HepG2 (cell line): ENCODE measurements at regions of chr3 and their contacts with region 1.

Region 1: DNA sequence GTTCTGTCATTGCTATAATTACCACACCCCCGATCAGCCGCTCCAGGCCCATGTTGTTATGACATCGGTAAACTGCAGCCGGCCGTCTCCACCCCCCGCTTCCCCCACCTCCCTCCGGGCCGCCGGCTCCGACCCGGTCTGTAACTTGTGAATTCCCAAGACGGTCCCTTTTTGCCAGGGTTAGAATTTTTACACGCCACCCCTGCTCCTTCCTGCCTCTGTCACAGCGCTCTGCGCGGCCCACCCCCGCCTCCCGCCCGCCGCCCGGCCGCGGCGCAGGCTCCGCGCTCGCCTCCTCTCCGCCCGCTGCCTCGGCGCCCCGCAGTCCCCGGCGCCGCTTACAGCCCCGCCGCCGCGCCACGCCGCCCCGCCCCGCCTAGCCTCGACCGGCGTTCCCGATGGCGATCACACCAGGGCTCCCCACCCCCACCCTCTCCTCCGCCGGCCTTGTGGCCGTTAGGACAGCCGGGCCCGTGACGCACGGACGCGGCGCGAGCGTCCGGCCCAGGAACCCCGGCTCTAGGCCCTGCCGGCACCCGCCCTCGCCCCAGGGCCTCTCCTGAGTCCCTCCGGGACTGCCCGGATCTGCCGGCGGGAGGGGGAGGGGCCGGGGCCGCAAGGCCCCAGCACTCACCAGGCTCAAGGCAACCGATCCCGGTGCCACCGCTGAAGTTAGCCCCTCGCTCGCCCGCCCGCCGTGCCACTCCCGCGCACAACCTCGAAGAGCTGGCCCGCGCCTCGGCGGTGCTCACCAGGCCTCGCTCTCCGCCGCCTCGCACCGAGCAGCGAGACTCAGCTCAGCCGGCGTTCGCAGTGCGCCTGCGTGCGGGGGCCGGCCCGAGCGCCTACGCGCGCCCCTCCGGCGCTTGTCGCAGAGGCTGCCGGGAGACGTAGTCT is at the start of gene KPNA1:
- DNase-seq: peak; percentile 76
- ATAC-seq: peak; percentile 94
- H3K4me3 ChIP-seq: peak within 1 kb of the TSS; percentile 78 to 89 (median 79)
- H3K27ac ChIP-seq: peak within 1 kb of the TSS; percentile 97
- H3K4me1 ChIP-seq: peaks cover 56% of the 10 kb centered on the region
- H3K27me3 ChIP-seq: no peaks in the 10 kb centered on the region; a peak in 1 of 5 replicates
- CTCF ChIP-seq: no peak; the same call in 1 of the 2 replicates
- EP300 ChIP-seq: no peak
- POLR2A ChIP-seq: peak; percentile 86 to 95
- RAD21 ChIP-seq: peak; percentile 64
- total RNA-seq, gene KPNA1: 30.0 and 49.7 TPM in 2 replicates

Region 2: GRCh38 chr3:122398920-122399319 is 115.5 kb before region 1 on chr3:
- CTCF ChIA-PET with region 1: no interaction called
- POLR2A ChIA-PET with region 1: no interaction called
- in situ Hi-C with region 1: no loop called
- intact Hi-C with region 1: no loop called
- DNase-seq: no peak
- ATAC-seq: no peak
- H3K4me3 ChIP-seq: no peak overlapping the region
- H3K27ac ChIP-seq: no peak overlapping the region
- H3K4me1 ChIP-seq: peaks cover 6% of the 10 kb centered on the region
- H3K27me3 ChIP-seq: no peaks in the 10 kb centered on the region
- CTCF ChIP-seq: no peak
- EP300 ChIP-seq: no peak
- POLR2A ChIP-seq: no peak
- RAD21 ChIP-seq: no peak

Region 3: DNA sequence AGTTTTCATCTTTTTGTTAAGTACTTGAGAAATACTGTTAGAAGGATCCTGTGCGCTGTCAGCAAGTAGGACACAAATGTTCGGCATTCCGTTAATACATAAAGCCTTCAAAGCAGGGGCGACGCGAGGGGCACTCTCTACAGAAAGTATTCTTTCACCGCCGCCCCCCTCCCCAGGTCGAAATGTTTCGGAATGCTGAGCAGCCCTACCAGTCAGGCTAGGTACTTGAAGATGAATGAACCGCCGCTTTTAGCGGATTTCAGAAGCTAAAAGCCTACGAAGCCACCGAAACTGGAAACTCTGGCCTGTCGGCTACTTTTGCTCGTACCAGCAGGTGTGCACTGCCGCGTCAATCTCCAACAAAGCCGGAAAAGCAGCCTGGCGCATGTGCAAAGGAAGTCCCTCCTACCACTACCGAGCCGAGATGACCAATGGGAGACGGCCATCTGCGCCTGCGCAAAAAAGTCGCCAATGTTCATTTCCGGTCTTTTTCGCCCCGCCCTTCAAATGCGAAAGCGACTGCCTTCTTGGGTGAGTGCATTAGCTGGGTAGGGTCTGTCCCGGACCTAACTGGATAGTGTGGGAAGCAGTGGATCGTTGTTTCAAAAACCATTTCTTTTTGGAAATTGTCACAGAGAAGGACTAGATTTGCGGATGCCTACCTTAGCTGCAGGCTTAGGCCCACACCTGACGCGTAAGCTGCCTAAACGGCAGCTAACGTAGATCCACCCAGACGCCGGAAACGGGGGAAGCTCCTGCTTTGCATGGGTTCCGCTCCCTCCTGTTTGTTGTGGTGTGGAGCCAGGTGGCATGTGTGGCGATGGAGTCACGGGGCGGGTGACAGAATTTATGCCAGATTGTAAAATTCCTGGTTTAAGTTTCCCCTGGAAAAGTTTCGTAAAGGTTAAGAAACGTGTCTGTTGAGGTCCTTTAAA is 98.4 kb before region 1 on chr3 and contains the start of gene WDR5B:
- CTCF ChIA-PET with region 1: no interaction called
- POLR2A ChIA-PET with region 1: interaction called, 12 read pairs
- in situ Hi-C with region 1: no loop called
- intact Hi-C with region 1: loop called (anchors 2 kb)
- DNase-seq: peak; percentile 96
- ATAC-seq: peak; percentile 95
- H3K4me3 ChIP-seq: peak within 1 kb of the TSS; percentile 61 to 81 (median 81)
- H3K27ac ChIP-seq: peak within 1 kb of the TSS; percentile 89
- H3K4me1 ChIP-seq: peaks cover 33% of the 10 kb centered on the region
- H3K27me3 ChIP-seq: no peaks in the 10 kb centered on the region; a peak in 1 of 5 replicates
- CTCF ChIP-seq: no peak
- EP300 ChIP-seq: no peak
- POLR2A ChIP-seq: peak; percentile 90 to 97
- RAD21 ChIP-seq: peak; percentile 35; the same call in 1 of the 2 replicates
- total RNA-seq, gene WDR5B: 3.6 and 4.5 TPM in 2 replicates

Region 4: GRCh38 chr3:122469659-122470058 is 44.7 kb before region 1 on chr3:
- CTCF ChIA-PET with region 1: no interaction called
- POLR2A ChIA-PET with region 1: no interaction called
- in situ Hi-C with region 1: no loop called
- intact Hi-C with region 1: loop called (anchors 5 kb)
- DNase-seq: no peak
- ATAC-seq: no peak
- H3K4me3 ChIP-seq: no peak overlapping the region
- H3K27ac ChIP-seq: no peak overlapping the region
- H3K4me1 ChIP-seq: peaks cover 13% of the 10 kb centered on the region
- H3K27me3 ChIP-seq: no peaks in the 10 kb centered on the region
- CTCF ChIP-seq: no peak
- EP300 ChIP-seq: no peak
- POLR2A ChIP-seq: no peak
- RAD21 ChIP-seq: no peak

Region 5: DNA sequence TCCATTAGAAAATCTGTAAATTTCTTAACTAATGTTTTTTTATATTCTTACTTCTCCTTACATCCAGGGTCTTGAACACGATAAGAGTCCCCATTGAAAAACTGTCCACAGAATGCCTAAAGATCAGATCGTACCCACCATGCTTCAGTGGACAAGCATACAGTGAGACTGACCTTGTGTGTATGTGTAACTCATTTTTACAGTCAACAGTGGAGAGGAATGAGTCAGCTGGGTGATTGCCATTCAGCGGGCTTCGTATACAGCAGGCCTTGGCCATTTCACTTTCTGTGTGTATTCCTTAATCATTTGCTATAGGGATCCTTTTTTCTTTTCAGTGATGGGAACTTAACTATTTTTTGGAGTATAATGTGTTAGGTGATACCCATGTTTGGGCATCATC is 176.8 kb after region 1 on chr3:
- CTCF ChIA-PET with region 1: no interaction called
- POLR2A ChIA-PET with region 1: no interaction called
- in situ Hi-C with region 1: no loop called
- intact Hi-C with region 1: no loop called
- DNase-seq: peak; percentile 80
- ATAC-seq: peak; percentile 93
- H3K4me3 ChIP-seq: no peak overlapping the region
- H3K27ac ChIP-seq: peak overlapping the region; percentile 37
- H3K4me1 ChIP-seq: peaks cover 49% of the 10 kb centered on the region
- H3K27me3 ChIP-seq: no peaks in the 10 kb centered on the region
- CTCF ChIP-seq: no peak
- EP300 ChIP-seq: no peak
- POLR2A ChIP-seq: no peak
- RAD21 ChIP-seq: no peak